Natural killer cell (primary cell): ENCODE measurements at regions of chr4 and their contacts with region 1.

Region 1: GRCh38 chr4:87390891-87391575 is at the start of gene HSD17B11:
- DNase-seq: peak; percentile 66 to 92
- ATAC-seq: peak; percentile 97 to 99 (median 98)
- H3K4me3 ChIP-seq: peak within 1 kb of the TSS; percentile 53
- H3K4me3 Mint-ChIP-seq: peak within 1 kb of the TSS; percentile 96
- H3K27ac ChIP-seq: peak within 1 kb of the TSS; percentile 63
- H3K27ac Mint-ChIP-seq: peak within 1 kb of the TSS; percentile 91
- H3K4me1 ChIP-seq: peaks cover 18% of the 10 kb centered on the region
- H3K4me1 Mint-ChIP-seq: peaks cover 46 to 47% of the 10 kb centered on the region in 2 donors
- H3K27me3 ChIP-seq: no peaks in the 10 kb centered on the region
- H3K27me3 Mint-ChIP-seq: no peaks in the 10 kb centered on the region
- CTCF ChIP-seq: no peak
- total RNA-seq, gene HSD17B11: 42.2 to 50.5 (median 49.8) TPM

Region 2: DNA sequence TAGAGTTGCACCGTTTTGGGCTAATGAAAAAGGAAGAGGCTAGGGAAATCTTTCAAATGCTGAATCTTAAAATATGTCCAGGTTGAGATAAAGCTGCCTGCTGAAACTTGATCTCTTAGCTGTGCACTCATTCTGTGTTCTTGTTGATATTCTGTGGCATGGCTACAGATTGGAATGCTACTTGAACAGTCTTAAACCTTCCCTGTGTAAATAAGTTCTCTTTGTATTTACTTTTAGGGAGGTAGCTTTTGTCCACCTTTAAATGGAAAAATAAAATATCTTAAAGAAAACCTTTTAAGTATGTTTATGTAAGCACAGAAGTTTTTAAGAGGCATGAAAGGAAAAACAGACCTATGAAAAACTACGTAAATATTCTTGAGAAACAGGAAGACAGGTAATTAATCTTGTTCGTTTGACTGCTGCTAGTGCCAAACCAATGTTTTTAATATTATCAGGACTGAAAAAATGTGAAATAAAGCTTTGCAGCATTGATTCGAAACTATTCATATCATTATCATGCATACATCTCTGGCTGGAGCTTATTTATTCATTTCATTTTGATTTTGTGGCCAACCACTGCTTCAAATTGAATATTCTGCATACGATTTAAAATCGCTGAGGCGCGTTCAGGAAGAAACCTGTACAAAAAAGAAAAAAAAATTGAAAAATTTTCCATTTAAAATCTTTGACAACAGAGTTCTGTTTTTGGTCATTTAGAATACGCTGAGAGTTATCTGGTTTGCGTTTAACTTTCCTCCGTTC is 86.2 kb before region 1 on chr4:
- intact Hi-C with region 1: no loop called
- DNase-seq: no peak
- ATAC-seq: no peak
- H3K4me3 ChIP-seq: no peak overlapping the region
- H3K4me3 Mint-ChIP-seq: no peak overlapping the region
- H3K27ac ChIP-seq: no peak overlapping the region
- H3K27ac Mint-ChIP-seq: no peak overlapping the region
- H3K4me1 ChIP-seq: no peaks in the 10 kb centered on the region
- H3K4me1 Mint-ChIP-seq: no peaks in the 10 kb centered on the region
- H3K27me3 ChIP-seq: no peaks in the 10 kb centered on the region
- H3K27me3 Mint-ChIP-seq: peaks cover under 1 to 11% of the 10 kb centered on the region in 2 donors
- CTCF ChIP-seq: no peak

Region 3: DNA sequence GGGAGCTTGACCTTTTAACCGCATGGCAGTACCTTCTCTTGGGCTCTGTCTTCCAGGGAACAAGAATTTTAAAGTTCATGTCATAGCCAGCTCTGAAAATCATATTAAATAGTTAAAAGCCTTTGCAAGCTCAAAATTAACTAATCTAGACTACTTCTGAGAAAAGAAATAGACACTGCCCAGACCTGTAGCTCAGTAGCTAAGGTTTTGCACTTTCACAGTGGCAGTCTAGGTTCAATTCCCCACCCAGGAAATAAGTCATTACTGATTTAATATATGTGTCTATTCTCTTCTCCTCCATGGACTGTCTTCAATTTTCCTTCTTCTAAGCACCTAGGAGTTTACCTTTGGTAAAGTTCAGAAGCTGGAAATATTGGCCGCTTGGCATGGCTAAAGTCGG is 27.5 kb before region 1 on chr4:
- intact Hi-C with region 1: no loop called
- DNase-seq: no peak
- ATAC-seq: no peak
- H3K4me3 ChIP-seq: no peak overlapping the region
- H3K4me3 Mint-ChIP-seq: no peak overlapping the region
- H3K27ac ChIP-seq: no peak overlapping the region
- H3K27ac Mint-ChIP-seq: peak overlapping the region in 1 of 2 donors; percentile 27
- H3K4me1 ChIP-seq: no peaks in the 10 kb centered on the region
- H3K4me1 Mint-ChIP-seq: peaks cover 0 to 9% of the 10 kb centered on the region in 2 donors
- H3K27me3 ChIP-seq: no peaks in the 10 kb centered on the region
- H3K27me3 Mint-ChIP-seq: no peaks in the 10 kb centered on the region
- CTCF ChIP-seq: no peak

Region 4: DNA sequence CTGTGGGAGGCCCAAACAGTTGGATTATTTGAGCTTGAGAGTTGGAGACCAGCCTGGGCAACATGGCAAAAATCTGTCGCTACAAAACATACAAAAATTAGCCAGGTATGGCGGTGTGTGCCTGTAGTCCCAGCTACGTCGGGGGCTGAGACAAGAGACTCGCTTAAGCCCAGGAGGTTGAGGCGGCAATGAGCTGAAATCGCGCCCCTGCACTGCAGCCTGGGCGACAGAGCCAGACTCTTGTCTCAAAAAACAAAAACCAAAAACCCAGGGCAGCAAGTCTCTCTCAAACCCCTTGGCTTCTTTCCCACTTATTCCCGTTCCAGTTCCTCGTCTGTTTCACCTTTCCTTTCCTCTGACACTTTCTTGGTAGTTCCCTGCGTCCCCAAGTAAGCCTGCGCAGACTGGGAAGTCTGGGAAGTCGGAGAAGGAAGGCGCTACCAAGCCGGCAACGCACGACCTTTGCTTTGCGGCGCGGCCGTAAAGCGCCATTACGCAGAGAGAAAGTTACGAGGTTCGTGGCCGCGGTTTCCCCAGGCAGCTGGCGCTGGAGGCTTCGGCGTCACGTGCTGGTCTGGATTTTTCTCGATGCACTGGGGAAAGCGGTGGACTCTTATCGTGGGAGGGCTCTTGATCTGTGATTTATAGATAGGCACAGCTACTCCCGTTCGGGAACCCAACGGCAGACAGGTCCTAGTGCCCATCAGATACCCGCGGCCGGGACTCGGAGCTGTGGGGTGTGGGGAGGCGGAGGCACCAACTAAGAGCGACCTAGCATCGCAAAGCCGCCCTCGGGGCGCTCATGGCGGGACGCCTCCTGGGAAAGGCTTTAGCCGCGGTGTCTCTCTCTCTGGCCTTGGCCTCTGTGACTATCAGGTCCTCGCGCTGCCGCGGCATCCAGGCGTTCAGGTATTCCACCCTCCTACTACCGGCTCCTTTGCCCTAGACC is 31.3 kb after region 1 on chr4 and contains the start of gene NUDT9:
- intact Hi-C with region 1: loop called (anchors 1 kb)
- DNase-seq: peak; percentile 91 to 93
- ATAC-seq: peak; percentile 85 to 92 (median 88)
- H3K4me3 ChIP-seq: peak within 1 kb of the TSS; percentile 64
- H3K4me3 Mint-ChIP-seq: peak within 1 kb of the TSS; percentile 99
- H3K27ac ChIP-seq: peak within 1 kb of the TSS; percentile 76
- H3K27ac Mint-ChIP-seq: peak within 1 kb of the TSS; percentile 98 to 100
- H3K4me1 ChIP-seq: peaks cover 14% of the 10 kb centered on the region
- H3K4me1 Mint-ChIP-seq: peaks cover 34% of the 10 kb centered on the region in 2 donors
- H3K27me3 ChIP-seq: no peaks in the 10 kb centered on the region
- H3K27me3 Mint-ChIP-seq: no peaks in the 10 kb centered on the region
- CTCF ChIP-seq: no peak
- total RNA-seq, gene NUDT9: 7.3 to 9.6 (median 9.5) TPM

Region 5: GRCh38 chr4:88204882-88205281 is 813.8 kb after region 1 on chr4:
- intact Hi-C with region 1: loop called (anchors 10 kb)
- DNase-seq: no peak
- ATAC-seq: no peak
- H3K4me3 ChIP-seq: no peak overlapping the region
- H3K4me3 Mint-ChIP-seq: no peak overlapping the region
- H3K27ac ChIP-seq: no peak overlapping the region
- H3K27ac Mint-ChIP-seq: no peak overlapping the region
- H3K4me1 ChIP-seq: no peaks in the 10 kb centered on the region
- H3K4me1 Mint-ChIP-seq: no peaks in the 10 kb centered on the region
- H3K27me3 ChIP-seq: no peaks in the 10 kb centered on the region
- H3K27me3 Mint-ChIP-seq: no peaks in the 10 kb centered on the region
- CTCF ChIP-seq: no peak